K562 (cell line): ENCODE measurements at regions of chr11 and their contacts with region 1.

Region 1: DNA sequence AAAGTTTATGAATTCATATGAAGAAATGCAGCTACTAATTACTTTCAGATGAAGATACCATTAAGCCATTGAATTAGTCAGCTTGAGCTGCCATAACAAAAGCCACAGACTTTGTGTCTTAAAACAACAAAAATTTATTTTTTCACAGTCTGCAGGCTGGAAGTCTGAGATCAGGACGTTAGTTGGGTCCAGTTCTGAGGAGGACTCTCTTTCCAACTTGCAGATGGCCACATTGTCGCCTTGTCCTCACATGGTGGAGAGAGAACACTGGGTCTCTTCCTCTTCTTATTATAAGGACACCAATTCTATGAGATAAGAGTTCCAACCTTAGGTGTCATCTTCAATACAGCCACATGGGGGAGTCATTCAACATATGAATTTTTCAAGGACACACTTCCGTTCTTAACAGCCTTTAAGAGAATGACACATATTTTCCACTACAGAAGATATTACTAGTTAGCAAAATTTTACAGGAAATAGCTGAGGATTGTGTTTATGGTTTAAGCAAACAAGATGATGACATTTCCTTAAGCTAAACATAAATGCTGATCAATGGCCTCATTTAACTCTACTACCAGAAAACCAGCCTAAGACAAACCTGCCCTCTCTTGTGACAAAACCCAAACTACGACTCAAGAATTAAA is 56.0 kb downstream of the DCUN1D5 start:
- DNase-seq: peak; percentile 36 to 72 (median 44)
- ATAC-seq: peak; percentile 93
- H3K4me3 ChIP-seq: no peak overlapping the region
- H3K27ac ChIP-seq: no peak overlapping the region; the same call in 2 of the 3 replicates
- H3K4me1 ChIP-seq: no peaks in the 10 kb centered on the region
- H3K27me3 ChIP-seq: no peaks in the 10 kb centered on the region
- CTCF ChIP-seq: peak; percentile 37 to 64 (median 64); a peak in 5 of 6 replicates
- EP300 ChIP-seq: no peak
- POLR2A ChIP-seq: no peak
- RAD21 ChIP-seq: peak; percentile 55 to 66

Region 2: GRCh38 chr11:102733232-102733875 is 302.6 kb before region 1 on chr11:
- CTCF ChIA-PET with region 1: no interaction called
- POLR2A ChIA-PET with region 1: no interaction called
- in situ Hi-C with region 1: no loop called
- intact Hi-C with region 1: loop called (anchors 5 kb)
- DNase-seq: peak; percentile 67 to 78 (median 71)
- ATAC-seq: peak; percentile 100
- H3K4me3 ChIP-seq: no peak overlapping the region
- H3K27ac ChIP-seq: no peak overlapping the region
- H3K4me1 ChIP-seq: no peaks in the 10 kb centered on the region
- H3K27me3 ChIP-seq: no peaks in the 10 kb centered on the region
- CTCF ChIP-seq: peak; percentile 76 to 88 (median 86)
- EP300 ChIP-seq: no peak
- POLR2A ChIP-seq: no peak
- RAD21 ChIP-seq: peak; percentile 79 to 80

Region 3: GRCh38 chr11:102831489-102832440 is 204.1 kb before region 1 on chr11:
- CTCF ChIA-PET with region 1: no interaction called
- POLR2A ChIA-PET with region 1: no interaction called
- in situ Hi-C with region 1: no loop called
- intact Hi-C with region 1: loop called (anchors 10 kb)
- DNase-seq: peak in 2 of 4 experiments; percentile 12 to 21
- ATAC-seq: peak; percentile 77
- H3K4me3 ChIP-seq: no peak overlapping the region
- H3K27ac ChIP-seq: no peak overlapping the region
- H3K4me1 ChIP-seq: no peaks in the 10 kb centered on the region
- H3K27me3 ChIP-seq: no peaks in the 10 kb centered on the region
- CTCF ChIP-seq: peak; percentile 20 to 44 (median 35); a peak in 1 of 6 replicates
- EP300 ChIP-seq: no peak
- POLR2A ChIP-seq: no peak
- RAD21 ChIP-seq: peak; percentile 16 to 38; a peak in 2 of 4 replicates

Region 4: GRCh38 chr11:103601225-103601846 is 565.4 kb after region 1 on chr11:
- CTCF ChIA-PET with region 1: no interaction called
- POLR2A ChIA-PET with region 1: no interaction called
- in situ Hi-C with region 1: no loop called
- intact Hi-C with region 1: loop called (anchors 10 kb)
- DNase-seq: peak; percentile 25 to 55 (median 41)
- ATAC-seq: peak; percentile 60; the same call in 2 of the 3 replicates
- H3K4me3 ChIP-seq: no peak overlapping the region
- H3K27ac ChIP-seq: no peak overlapping the region
- H3K4me1 ChIP-seq: no peaks in the 10 kb centered on the region
- H3K27me3 ChIP-seq: no peaks in the 10 kb centered on the region
- CTCF ChIP-seq: peak; percentile 48 to 57 (median 55); a peak in 5 of 6 replicates
- EP300 ChIP-seq: no peak
- POLR2A ChIP-seq: no peak
- RAD21 ChIP-seq: peak; percentile 49 to 60